ENCODE measurements at regions of chr11 and their contacts with region 1.

Region 1: DNA sequence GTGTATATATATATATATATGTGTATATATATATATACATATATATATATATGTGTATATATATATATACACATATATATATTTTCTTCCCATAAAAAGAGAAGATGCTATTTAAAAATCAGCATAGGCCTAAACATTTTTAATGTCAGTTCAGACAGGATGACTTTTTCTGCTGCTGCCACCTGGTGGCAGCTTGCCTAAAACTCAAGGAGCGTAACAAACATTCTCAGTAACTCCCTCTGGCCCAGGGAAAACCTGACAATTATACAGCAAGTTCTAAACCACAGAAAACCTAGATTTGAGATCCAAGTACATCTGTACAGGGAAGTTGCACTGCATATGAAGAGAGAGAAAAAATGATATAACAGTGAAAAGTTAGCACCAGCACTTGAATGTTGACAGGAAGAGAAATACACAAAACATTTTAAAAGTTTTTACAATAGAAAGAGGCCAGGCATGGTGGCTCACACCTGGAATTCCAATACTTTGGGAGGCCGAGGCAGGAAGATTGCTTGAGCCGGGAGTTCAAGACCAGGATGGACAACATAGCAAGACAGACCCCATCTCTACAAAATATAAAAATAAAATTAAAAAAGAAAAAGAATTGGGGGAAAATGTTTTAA is 16.6 kb downstream of the OR8A1 start:
- DNase-seq: no peak
- H3K4me3 ChIP-seq: no peak overlapping the region
- H3K27ac ChIP-seq: no peak overlapping the region
- H3K4me1 ChIP-seq: no peaks in the 10 kb centered on the region
- H3K27me3 ChIP-seq: no peaks in the 10 kb centered on the region
- CTCF ChIP-seq: peak; percentile 40 to 60 (median 50)
- EP300 ChIP-seq: no peak
- POLR2A ChIP-seq: no peak

Region 2: DNA sequence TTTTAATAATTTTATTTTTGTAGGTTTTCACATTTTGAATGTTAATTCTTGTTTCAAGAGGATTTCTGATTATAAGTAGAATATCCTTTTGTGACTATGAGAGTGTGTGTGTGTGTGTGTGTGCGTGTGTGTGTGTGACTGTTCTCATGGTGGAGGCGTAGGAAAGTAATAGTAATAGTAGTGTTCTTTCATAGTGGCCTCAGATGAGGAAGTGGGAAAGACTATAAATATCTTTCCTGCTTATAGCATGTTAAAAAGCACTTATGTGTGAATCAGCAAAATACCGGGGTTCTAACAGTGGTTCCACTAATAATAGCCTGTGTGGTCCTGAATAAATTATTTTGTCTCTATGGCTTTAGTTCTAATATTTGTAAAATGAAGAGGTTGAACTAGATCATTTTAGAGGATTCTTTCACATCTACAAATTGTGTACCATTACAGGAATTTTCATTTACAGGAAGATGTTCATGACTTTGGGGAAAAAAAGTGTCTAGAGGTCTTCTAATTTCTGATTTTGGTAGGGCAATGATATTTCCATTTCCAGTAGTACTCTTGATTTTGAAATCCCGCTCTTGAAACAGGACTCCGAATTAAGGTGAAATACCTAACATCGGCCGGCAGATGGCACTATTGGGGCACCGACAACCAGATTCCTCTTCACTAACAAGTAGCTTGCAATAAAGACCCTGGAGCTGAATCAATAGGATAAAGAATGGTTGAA is 515.3 kb before region 1 on chr11:
- intact Hi-C with region 1: loop called (anchors 10 kb)
- DNase-seq: no peak
- H3K4me3 ChIP-seq: no peak overlapping the region
- H3K27ac ChIP-seq: no peak overlapping the region
- H3K4me1 ChIP-seq: peaks cover 4 to 20% (median 13%) of the 10 kb centered on the region in 4 donors
- H3K27me3 ChIP-seq: peaks cover 0 to 48% (median 4%) of the 10 kb centered on the region in 4 donors
- CTCF ChIP-seq: peak; percentile 64 to 76 (median 75)
- EP300 ChIP-seq: no peak
- POLR2A ChIP-seq: no peak

Region 3: GRCh38 chr11:124421043-124421442 is 165.3 kb before region 1 on chr11:
- intact Hi-C with region 1: loop called (anchors 5 kb)
- DNase-seq: no peak
- H3K4me3 ChIP-seq: no peak overlapping the region
- H3K27ac ChIP-seq: no peak overlapping the region
- H3K4me1 ChIP-seq: no peaks in the 10 kb centered on the region
- H3K27me3 ChIP-seq: peaks cover 0 to 20% (median 0%) of the 10 kb centered on the region in 4 donors
- CTCF ChIP-seq: no peak
- EP300 ChIP-seq: no peak
- POLR2A ChIP-seq: no peak

Region 4: DNA sequence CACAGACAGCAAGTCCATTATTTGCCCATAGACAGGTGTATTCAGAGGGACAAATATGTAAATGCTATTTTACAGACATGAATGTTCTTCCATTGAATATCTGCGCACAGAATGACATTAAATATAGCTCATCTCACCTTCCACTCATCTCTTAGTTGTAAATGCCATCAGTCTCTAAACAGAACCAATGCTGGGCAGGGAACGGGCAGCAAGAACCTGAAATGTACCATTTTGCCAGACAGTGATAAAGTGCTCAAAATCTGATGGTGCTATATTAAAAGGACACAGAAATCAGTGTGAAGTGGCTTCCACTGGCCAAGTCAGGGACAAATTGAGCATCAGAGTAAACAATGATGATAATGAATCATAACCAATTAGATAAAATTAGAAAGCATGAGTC is 151.7 kb before region 1 on chr11:
- intact Hi-C with region 1: no loop called
- DNase-seq: peak; percentile 64
- H3K4me3 ChIP-seq: no peak overlapping the region
- H3K27ac ChIP-seq: no peak overlapping the region
- H3K4me1 ChIP-seq: no peaks in the 10 kb centered on the region
- H3K27me3 ChIP-seq: peaks cover 0 to 9% (median 0%) of the 10 kb centered on the region in 4 donors
- CTCF ChIP-seq: no peak
- EP300 ChIP-seq: no peak
- POLR2A ChIP-seq: no peak